ENCODE measurements at regions of chrX and their contacts with region 1.

Region 1: DNA sequence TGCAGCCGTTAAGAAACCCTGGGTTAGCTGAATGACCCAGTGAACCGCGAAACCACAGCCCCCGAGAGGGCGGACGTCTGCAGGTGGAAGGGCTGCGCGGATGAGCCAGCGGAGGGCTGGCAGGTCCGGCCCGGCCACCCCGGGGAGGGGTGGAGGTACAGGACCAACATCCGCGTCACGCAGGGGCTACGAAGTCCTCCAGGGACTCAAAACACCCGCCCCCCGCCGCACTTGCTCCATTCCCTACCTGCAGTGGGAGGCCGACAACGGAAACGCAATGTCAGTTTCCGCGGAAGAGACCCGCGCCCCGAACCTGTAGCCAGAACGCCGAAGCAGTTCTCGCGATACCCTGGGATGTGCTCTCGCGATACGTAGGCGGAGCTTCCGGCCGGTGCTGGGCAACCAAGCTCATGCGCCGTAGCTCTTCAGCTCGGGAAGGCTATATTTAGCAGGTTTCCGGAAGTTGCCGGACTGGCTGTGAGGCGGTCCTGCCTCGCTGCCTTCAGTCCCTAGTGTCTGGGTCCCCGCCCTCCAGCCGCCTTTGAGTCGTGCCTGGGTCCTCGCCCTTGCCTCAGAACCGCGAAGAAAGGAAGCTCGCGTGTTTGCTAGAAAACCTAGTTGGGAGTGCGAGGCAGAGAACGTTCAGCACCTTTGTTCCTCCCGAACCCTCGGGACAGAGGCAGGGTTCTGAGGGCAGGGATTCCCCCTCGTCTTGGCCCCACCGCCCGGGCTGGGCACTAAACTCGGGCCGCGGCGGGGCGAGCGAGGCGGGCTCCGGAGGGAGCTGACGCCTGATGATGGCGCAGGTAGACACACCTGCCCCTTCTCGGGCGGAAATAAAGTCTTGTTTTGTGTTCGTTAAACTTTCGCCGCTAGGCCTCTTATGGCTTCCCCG is at the starts of genes OFD1 and TRAPPC2:
- DNase-seq: peak; percentile 91 to 97
- ATAC-seq: peak; percentile 99 to 100
- H3K4me3 ChIP-seq: peak within 1 kb of the TSS; percentile 89
- H3K27ac ChIP-seq: peak within 1 kb of the TSS; percentile 92 to 93
- H3K4me1 ChIP-seq: peaks cover 18% of the 10 kb centered on the region; the same call in 2 of the 3 replicates
- CTCF ChIP-seq: no peak
- EP300 ChIP-seq: no peak
- POLR2A ChIP-seq: peak; percentile 76
- RAD21 ChIP-seq: no peak
- polyA plus RNA-seq, gene OFD1: 18.2 and 24.9 TPM in 2 replicates
- polyA plus RNA-seq, gene TRAPPC2: 11.6 and 12.2 TPM in 2 replicates

Region 2: DNA sequence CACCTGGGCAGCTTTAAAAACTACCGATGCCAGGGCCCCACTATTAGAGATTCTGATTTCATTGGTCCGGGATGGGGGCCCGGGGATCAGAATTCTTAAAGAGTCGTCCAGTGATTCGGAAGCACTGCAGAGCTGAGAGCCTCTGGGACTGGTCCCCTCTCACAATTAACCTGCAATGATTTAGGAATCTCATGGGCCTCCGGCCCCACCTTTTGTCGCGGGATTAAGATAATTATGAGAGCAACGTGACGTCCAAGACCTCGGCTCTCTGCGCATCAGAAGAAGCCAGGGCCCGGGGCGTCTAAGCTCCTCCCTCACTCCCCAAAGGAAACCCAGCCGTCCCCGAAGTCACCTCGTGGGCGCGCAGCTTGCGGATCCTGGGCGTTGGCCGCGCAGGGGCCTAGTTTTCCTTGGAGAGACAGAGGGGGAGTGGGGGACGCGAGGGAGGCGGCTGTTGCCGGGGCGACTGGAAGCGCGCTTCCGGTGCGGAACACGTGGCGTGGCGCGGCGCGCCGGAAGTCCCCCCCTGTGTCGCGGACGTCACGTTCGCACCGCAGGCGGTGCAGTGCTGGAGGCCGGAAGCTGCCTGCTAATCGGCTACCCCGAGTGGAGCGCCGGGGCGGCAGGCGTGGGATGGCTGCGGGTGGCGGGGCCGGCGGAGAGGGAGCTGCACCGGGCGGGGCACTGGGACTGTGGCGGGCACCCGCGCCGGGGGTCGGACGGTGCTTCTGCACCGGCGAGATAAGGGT is 295.1 kb after region 1 on chrX and contains the start of gene GEMIN8:
- CTCF ChIA-PET with region 1: interaction called, 5 read pairs
- POLR2A ChIA-PET with region 1: interaction called, 20 read pairs
- DNase-seq: peak; percentile 59 to 95
- ATAC-seq: peak; percentile 95 to 96
- H3K4me3 ChIP-seq: peak within 1 kb of the TSS; percentile 87
- H3K27ac ChIP-seq: peak within 1 kb of the TSS; percentile 94 to 97
- H3K4me1 ChIP-seq: peaks cover 25% of the 10 kb centered on the region
- CTCF ChIP-seq: no peak
- EP300 ChIP-seq: no peak
- POLR2A ChIP-seq: peak; percentile 75
- RAD21 ChIP-seq: peak in 1 of 2 experiments; percentile 21; a peak in 1 of 5 replicates
- polyA plus RNA-seq, gene GEMIN8: 21.8 and 27.5 TPM in 2 replicates

Measured in A549 (cell line).